Mammary epithelial cell (primary cell): ENCODE measurements at regions of chr11 and their contacts with region 1.

Region 1: DNA sequence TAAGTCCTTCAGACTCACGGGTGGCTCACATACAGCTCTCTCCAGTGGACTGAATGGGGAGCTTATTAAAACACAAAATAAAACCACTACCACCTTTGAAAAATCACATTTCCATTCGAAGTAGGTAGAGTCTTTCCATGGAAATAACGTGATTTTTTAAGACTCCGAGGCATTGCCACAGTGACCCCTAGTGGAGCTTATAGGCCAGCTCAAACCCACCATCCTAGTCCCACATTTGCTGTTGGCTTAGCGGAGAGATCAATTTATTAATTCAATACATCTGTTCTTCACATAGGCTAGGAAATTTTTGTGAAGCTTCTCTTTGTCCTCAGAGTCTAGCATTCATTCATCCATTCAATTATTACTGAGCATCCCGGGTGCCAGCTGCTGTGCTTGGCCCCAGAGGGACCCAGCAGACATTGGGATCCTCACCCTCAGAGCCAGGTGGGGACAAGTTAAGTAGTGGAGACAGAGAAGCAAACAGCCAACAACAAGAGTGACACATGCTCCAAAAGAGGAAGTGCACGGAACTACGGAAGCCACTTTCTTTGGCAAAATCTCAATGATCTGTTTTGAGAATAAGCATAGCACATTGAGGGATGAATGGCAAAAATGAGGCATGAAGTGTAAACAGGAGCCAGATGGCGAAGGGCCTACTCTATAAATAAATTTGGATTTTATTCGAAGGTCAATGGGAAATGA is 10.2 kb upstream of the P4HA3 start:
- DNase-seq: peak; percentile 8
- H3K4me3 ChIP-seq: no peak overlapping the region
- H3K27ac ChIP-seq: no peak overlapping the region
- H3K4me1 ChIP-seq: peaks cover 17% of the 10 kb centered on the region
- H3K27me3 ChIP-seq: no peaks in the 10 kb centered on the region
- CTCF ChIP-seq: peak; percentile 75 to 78

Region 2: DNA sequence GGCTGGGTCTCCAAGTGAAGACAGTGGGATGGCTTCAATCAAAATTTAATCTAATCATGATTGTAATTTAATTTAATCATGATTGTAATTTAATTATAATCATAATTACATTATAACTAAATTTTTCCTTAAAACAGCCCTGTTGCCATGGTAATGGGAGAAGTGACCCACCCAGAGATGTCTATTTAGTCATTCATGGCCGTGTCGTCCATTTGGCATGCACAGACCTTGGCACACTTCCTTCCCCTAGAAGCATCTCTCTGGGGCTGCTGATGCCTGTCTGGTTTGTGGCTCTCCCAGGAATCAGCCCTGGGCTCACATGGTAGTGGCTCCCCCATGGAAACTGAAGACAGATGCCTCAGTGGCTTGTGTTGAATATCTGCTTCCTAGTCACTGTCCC is 37.2 kb before region 1 on chr11:
- CTCF ChIA-PET with region 1: interaction called, 3 read pairs
- dilution Hi-C with region 1: no loop called
- in situ Hi-C with region 1: no loop called
- intact Hi-C with region 1: loop called (anchors 2 kb)
- DNase-seq: no peak
- H3K4me3 ChIP-seq: no peak overlapping the region
- H3K27ac ChIP-seq: no peak overlapping the region
- H3K4me1 ChIP-seq: peaks cover 7% of the 10 kb centered on the region
- H3K27me3 ChIP-seq: no peaks in the 10 kb centered on the region
- CTCF ChIP-seq: no peak